Activated B cell treated with CpG ODN at 0.5 μM for 24 hours (primary cell): ENCODE measurements at regions of chr5 and their contacts with region 1.

Region 1: DNA sequence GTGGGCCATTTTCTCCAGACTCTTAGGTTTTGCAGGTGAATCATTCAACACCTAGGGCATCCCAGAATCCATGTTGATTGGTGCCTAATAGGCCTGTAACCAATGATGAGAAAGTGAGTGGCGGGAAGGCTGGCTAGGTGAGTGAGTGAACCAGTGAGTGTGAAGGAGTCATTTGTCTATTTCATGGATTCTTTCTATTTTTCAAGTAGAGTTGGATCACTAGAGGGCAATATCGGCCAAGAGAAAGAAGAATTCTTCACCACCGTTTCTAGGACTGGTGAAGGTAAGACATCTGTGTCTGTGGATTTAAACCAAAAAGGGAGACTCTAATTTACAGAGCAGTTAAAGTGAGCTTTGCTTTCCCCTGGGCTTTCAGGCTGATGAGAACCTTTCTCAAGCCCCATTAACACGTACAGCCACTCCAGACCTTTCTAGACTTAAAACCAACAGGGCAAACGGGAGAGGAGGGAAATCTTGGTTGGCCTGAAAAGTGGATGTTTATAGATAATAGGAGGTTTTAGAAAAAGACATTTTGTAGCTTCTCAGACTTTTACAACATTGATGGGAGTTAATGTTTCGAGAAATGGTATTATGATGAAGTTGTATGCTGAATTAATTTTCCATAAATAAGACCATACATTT is 114.3 kb upstream of the IL12B start:
- DNase-seq: no peak
- ATAC-seq: peak; percentile 67
- H3K4me3 Mint-ChIP-seq: no peak overlapping the region
- H3K27ac Mint-ChIP-seq: no peak overlapping the region
- H3K4me1 Mint-ChIP-seq: peaks cover 6% of the 10 kb centered on the region
- H3K27me3 Mint-ChIP-seq: no peaks in the 10 kb centered on the region
- CTCF ChIP-seq: no peak

Region 2: GRCh38 chr5:158751961-158752655 is 692.5 kb before region 1 on chr5:
- CTCF ChIA-PET with region 1: no interaction called
- POLR2A ChIA-PET with region 1: no interaction called
- intact Hi-C with region 1: no loop called
- DNase-seq: no peak
- ATAC-seq: peak; percentile 83
- H3K4me3 Mint-ChIP-seq: peak overlapping the region; percentile 71
- H3K27ac Mint-ChIP-seq: peak overlapping the region; percentile 84
- H3K4me1 Mint-ChIP-seq: peaks cover 92% of the 10 kb centered on the region
- H3K27me3 Mint-ChIP-seq: no peaks in the 10 kb centered on the region
- CTCF ChIP-seq: no peak

Region 3: GRCh38 chr5:159481751-159482150 is 37.2 kb after region 1 on chr5:
- CTCF ChIA-PET with region 1: no interaction called
- POLR2A ChIA-PET with region 1: no interaction called
- intact Hi-C with region 1: loop called (anchors 5 kb)
- DNase-seq: no peak
- ATAC-seq: no peak
- H3K4me3 Mint-ChIP-seq: no peak overlapping the region
- H3K27ac Mint-ChIP-seq: no peak overlapping the region
- H3K4me1 Mint-ChIP-seq: peaks cover 11% of the 10 kb centered on the region
- H3K27me3 Mint-ChIP-seq: no peaks in the 10 kb centered on the region
- CTCF ChIP-seq: no peak

Region 4: GRCh38 chr5:159915904-159916840 is 471.6 kb after region 1 on chr5 and contains the start of gene ADRA1B:
- CTCF ChIA-PET with region 1: interaction called, 7 read pairs
- POLR2A ChIA-PET with region 1: no interaction called
- intact Hi-C with region 1: loop called (anchors 1 kb)
- DNase-seq: peak; percentile 55
- ATAC-seq: peak; percentile 96
- H3K4me3 Mint-ChIP-seq: peak within 1 kb of the TSS; percentile 57
- H3K27ac Mint-ChIP-seq: no peak within 1 kb of the TSS
- H3K4me1 Mint-ChIP-seq: peaks cover 14% of the 10 kb centered on the region
- H3K27me3 Mint-ChIP-seq: peaks cover 29% of the 10 kb centered on the region
- CTCF ChIP-seq: no peak
- total RNA-seq, gene ADRA1B: 0.49 and 0.53 TPM in 2 replicates

Region 5: GRCh38 chr5:159965031-159965837 is 520.7 kb after region 1 on chr5:
- CTCF ChIA-PET with region 1: interaction called, 3 read pairs
- POLR2A ChIA-PET with region 1: no interaction called
- intact Hi-C with region 1: loop called (anchors 1 kb)
- DNase-seq: no peak
- ATAC-seq: no peak
- H3K4me3 Mint-ChIP-seq: no peak overlapping the region
- H3K27ac Mint-ChIP-seq: no peak overlapping the region
- H3K4me1 Mint-ChIP-seq: no peaks in the 10 kb centered on the region
- H3K27me3 Mint-ChIP-seq: peaks cover 42% of the 10 kb centered on the region
- CTCF ChIP-seq: no peak

Region 6: GRCh38 chr5:160008877-160009590 is 564.5 kb after region 1 on chr5 and contains the start of gene TTC1:
- CTCF ChIA-PET with region 1: no interaction called
- POLR2A ChIA-PET with region 1: no interaction called
- intact Hi-C with region 1: loop called (anchors 5 kb)
- DNase-seq: peak; percentile 72
- ATAC-seq: peak; percentile 98
- H3K4me3 Mint-ChIP-seq: peak within 1 kb of the TSS; percentile 100
- H3K27ac Mint-ChIP-seq: peak within 1 kb of the TSS; percentile 98
- H3K4me1 Mint-ChIP-seq: peaks cover 31% of the 10 kb centered on the region
- H3K27me3 Mint-ChIP-seq: no peaks in the 10 kb centered on the region
- CTCF ChIP-seq: no peak
- total RNA-seq, gene TTC1: 59.9 and 65.0 TPM in 2 replicates